ENCODE measurements at regions of chr6 and their contacts with region 1.

Region 1: DNA sequence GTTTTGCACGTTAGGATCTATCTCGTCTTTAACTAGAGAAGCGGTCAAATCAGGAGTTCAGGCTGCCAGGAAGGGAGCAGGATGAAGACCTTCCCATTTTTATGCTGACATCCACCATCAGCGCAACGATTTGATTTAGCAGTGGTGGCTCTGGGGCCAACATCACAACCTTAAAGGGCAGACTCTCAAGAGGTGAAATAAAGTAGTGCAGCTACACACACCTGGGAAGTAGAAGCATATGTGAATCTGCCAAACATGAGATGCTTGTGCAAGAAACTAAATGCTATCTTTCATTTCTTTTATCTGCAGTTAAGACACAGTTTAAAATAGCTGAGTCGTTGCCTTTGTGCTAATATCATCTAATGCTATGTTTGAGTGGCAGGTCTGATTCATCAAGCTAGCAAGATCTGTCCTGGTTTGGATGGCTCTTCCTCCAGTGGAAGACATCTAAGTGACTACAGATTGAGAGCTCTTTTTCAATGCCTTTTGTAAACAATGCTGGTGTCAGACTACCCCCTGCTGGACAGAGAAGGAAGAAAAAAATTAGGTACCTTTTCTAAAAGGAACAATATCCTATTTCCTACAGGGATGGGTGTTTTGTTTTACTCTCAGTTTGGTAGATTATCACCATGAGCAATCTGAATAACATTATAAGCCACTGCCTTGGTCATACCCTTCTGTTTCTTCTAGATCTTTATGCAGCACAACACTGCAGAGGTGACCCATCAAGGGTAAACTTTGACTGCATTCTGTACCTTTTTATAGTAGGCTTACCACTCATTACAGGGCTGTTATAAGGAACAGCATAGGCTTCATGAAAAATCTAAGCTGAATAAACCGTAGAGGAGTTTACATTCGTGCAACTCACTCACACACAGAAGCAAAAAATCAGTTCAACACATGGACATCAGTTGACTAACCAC is 171.6 kb upstream of the FBXL4 start:
- DNase-seq: peak; percentile 56
- H3K4me3 ChIP-seq: no peak overlapping the region
- H3K27ac ChIP-seq: no peak overlapping the region
- H3K4me1 ChIP-seq: no peaks in the 10 kb centered on the region
- H3K27me3 ChIP-seq: no peaks in the 10 kb centered on the region
- CTCF ChIP-seq: peak; percentile 80
- EP300 ChIP-seq: no peak
- RAD21 ChIP-seq: peak; percentile 94

Region 2: GRCh38 chr6:97437087-97437486 is 1682.3 kb before region 1 on chr6:
- CTCF ChIA-PET with region 1: interaction called, 13 read pairs
- POLR2A ChIA-PET with region 1: no interaction called
- DNase-seq: peak; percentile 42
- H3K4me3 ChIP-seq: peak overlapping the region in 1 of 2 experiments; percentile 5; a peak in 1 of 4 replicates
- H3K27ac ChIP-seq: no peak overlapping the region
- H3K4me1 ChIP-seq: no peaks in the 10 kb centered on the region; a peak in 2 of 4 replicates
- H3K27me3 ChIP-seq: no peaks in the 10 kb centered on the region
- CTCF ChIP-seq: peak; percentile 85
- EP300 ChIP-seq: no peak
- RAD21 ChIP-seq: peak; percentile 59; the same call in 1 of the 2 replicates

Region 3: GRCh38 chr6:99064834-99065233 is 54.5 kb before region 1 on chr6:
- CTCF ChIA-PET with region 1: interaction called, 11 read pairs
- POLR2A ChIA-PET with region 1: no interaction called
- DNase-seq: no peak
- H3K4me3 ChIP-seq: no peak overlapping the region
- H3K27ac ChIP-seq: no peak overlapping the region
- H3K4me1 ChIP-seq: peaks cover 0 to 2% of the 10 kb centered on the region in 2 experiments; a peak in 2 of 4 replicates
- H3K27me3 ChIP-seq: no peaks in the 10 kb centered on the region
- CTCF ChIP-seq: no peak
- EP300 ChIP-seq: no peak
- RAD21 ChIP-seq: no peak

Region 4: GRCh38 chr6:99096170-99096569 is 23.2 kb before region 1 on chr6:
- CTCF ChIA-PET with region 1: interaction called, 14 read pairs
- POLR2A ChIA-PET with region 1: no interaction called
- DNase-seq: no peak
- H3K4me3 ChIP-seq: no peak overlapping the region
- H3K27ac ChIP-seq: no peak overlapping the region
- H3K4me1 ChIP-seq: no peaks in the 10 kb centered on the region
- H3K27me3 ChIP-seq: no peaks in the 10 kb centered on the region; the same call in 1 of the 2 replicates
- CTCF ChIP-seq: no peak
- EP300 ChIP-seq: no peak
- RAD21 ChIP-seq: no peak

Region 5: GRCh38 chr6:99104218-99104617 is 15.2 kb before region 1 on chr6:
- CTCF ChIA-PET with region 1: interaction called, 43 read pairs
- POLR2A ChIA-PET with region 1: no interaction called
- DNase-seq: no peak
- H3K4me3 ChIP-seq: no peak overlapping the region
- H3K27ac ChIP-seq: no peak overlapping the region
- H3K4me1 ChIP-seq: no peaks in the 10 kb centered on the region
- H3K27me3 ChIP-seq: no peaks in the 10 kb centered on the region
- CTCF ChIP-seq: no peak
- EP300 ChIP-seq: no peak
- RAD21 ChIP-seq: no peak

Region 6: DNA sequence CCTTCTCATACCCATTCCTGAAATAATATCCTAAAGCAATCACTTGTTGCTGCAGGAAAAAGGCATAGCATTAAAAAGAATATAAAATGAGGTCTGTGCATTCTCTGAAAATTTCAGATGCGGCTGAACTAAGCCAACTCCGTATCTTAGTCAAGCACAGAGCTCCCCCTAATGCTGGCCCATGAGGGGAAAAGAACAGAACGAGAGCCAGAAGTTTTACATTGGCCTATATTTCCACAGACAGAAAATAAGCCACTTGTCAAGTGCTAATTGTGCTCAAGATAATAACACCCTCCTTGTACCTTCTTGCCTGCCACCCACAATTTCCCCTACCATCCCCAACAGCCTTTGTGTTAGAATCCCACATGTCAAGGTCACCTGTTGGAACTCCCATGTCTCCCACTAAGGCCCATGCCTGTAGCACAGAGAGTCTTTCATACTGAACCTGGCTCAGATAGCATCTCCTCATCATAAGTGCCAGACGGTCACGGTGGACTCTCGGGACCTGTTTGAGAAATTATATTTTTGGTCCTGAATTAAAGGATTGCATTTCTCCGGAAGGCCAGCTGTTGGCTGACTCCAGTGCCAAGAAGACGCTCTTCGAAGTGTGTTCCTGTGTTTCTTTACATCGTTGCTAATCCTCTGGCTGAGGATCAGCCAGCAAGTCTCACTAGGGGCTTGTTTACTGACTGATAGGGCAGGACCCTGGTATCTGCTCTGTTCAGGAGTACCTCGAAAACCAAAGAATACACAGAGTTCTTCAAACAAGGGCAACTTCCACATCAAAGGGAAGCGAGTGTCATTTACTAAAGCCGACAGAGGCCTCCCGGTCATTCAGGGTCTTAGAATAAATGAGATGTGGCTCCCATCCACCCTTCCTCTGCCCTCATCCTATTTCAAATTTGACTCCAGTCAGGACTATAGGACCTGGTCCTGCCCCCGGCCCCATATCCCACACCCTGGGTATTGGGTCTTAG is 11.8 kb after region 1 on chr6:
- CTCF ChIA-PET with region 1: interaction called, 29 read pairs
- POLR2A ChIA-PET with region 1: no interaction called
- DNase-seq: no peak
- H3K4me3 ChIP-seq: no peak overlapping the region
- H3K27ac ChIP-seq: no peak overlapping the region
- H3K4me1 ChIP-seq: peaks cover 0 to 3% of the 10 kb centered on the region in 2 experiments; a peak in 1 of 4 replicates
- H3K27me3 ChIP-seq: no peaks in the 10 kb centered on the region
- CTCF ChIP-seq: no peak
- EP300 ChIP-seq: no peak
- RAD21 ChIP-seq: peak; percentile 19; the same call in 1 of the 2 replicates

Region 7: DNA sequence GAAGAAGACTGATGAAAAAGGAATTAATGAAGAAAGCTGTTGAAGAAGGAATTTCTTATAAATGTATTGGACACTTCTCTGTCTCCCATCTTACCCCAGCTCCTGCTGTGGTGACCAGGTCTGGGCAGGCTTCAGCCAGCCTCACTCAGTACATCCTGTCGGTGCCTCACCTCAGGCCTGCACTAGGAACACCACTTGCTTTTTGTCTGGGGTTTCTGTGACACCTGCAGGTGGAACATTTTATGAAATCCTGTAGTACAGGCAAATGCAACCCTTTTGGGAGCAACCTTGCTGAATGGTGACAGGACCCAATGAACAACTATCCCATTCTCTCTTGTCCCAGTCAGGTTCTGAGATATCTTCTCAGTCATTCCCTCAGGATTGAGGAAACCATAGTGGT is 616.9 kb after region 1 on chr6:
- CTCF ChIA-PET with region 1: no interaction called
- POLR2A ChIA-PET with region 1: no interaction called
- DNase-seq: no peak
- H3K4me3 ChIP-seq: no peak overlapping the region
- H3K27ac ChIP-seq: no peak overlapping the region
- H3K4me1 ChIP-seq: no peaks in the 10 kb centered on the region
- H3K27me3 ChIP-seq: no peaks in the 10 kb centered on the region; the same call in 1 of the 2 replicates
- CTCF ChIP-seq: no peak
- EP300 ChIP-seq: no peak
- RAD21 ChIP-seq: no peak

Measured in SK-N-SH (cell line).